Endothelial cell of umbilical vein (primary cell): ENCODE measurements at regions of chr15 and their contacts with region 1.

Region 1: DNA sequence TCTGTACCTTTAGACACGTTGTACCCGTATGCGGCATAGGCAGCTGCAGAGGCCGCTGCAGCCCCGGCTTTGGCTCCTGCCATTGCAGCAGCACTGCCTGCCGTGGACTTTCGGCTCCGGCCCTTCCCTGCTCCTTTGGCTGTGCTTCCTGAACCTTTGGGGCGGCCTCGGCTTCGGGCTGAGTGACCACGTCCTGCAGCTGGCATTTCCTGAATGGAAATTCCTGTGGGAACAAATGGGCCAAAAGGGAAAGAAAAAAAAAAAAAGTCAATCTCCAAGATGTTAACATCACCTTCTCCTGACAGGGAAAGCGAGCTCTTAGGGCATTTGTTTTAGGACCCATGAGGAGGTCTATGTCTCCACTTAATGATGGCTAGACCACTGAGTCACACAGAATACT is 29.6 kb downstream of the CHAC1 start:
- DNase-seq: peak; percentile 93
- H3K4me3 ChIP-seq: peak overlapping the region in 1 of 3 experiments; percentile 23
- H3K27ac ChIP-seq: peak overlapping the region; percentile 94
- H3K4me1 ChIP-seq: peaks cover 40% of the 10 kb centered on the region
- H3K27me3 ChIP-seq: no peaks in the 10 kb centered on the region
- CTCF ChIP-seq: peak; percentile 12 to 42
- POLR2A ChIP-seq: peak; percentile 57

Region 2: DNA sequence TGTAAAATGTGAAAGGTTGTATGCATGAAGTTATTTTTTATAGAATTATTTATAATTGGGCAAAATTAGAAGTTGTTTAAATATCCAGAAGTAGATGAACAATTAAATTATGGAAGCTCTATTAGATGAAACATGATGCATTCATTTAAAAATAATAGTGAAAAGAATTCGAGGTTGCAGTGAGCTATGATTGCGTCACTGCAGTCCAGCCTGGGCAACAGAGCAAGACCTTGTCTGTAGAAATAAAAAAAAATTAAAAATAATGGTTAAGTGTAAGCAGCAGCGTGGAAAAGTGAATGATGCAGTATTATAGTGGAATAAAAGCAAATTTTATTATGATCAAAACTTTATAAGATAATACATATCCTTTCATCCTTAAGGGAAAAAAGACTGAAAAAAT is 807.7 kb before region 1 on chr15:
- CTCF ChIA-PET with region 1: no interaction called
- POLR2A ChIA-PET with region 1: no interaction called
- dilution Hi-C with region 1: no loop called
- intact Hi-C with region 1: no loop called
- DNase-seq: no peak
- H3K4me3 ChIP-seq: no peak overlapping the region
- H3K27ac ChIP-seq: no peak overlapping the region
- H3K4me1 ChIP-seq: no peaks in the 10 kb centered on the region
- H3K27me3 ChIP-seq: no peaks in the 10 kb centered on the region
- CTCF ChIP-seq: no peak
- POLR2A ChIP-seq: no peak

Region 3: GRCh38 chr15:40928821-40929659 is 53.8 kb before region 1 on chr15 and contains the start of gene DLL4:
- CTCF ChIA-PET with region 1: interaction called, 14 read pairs
- POLR2A ChIA-PET with region 1: interaction called, 4 read pairs
- dilution Hi-C with region 1: no loop called
- intact Hi-C with region 1: no loop called
- DNase-seq: peak; percentile 94
- H3K4me3 ChIP-seq: peak within 1 kb of the TSS; percentile 0 to 89 (median 56)
- H3K27ac ChIP-seq: no peak within 1 kb of the TSS
- H3K4me1 ChIP-seq: peaks cover 25% of the 10 kb centered on the region
- H3K27me3 ChIP-seq: peaks cover 14 to 21% of the 10 kb centered on the region in 2 experiments
- CTCF ChIP-seq: peak in 1 of 2 donors; percentile 7
- POLR2A ChIP-seq: peak; percentile 99
- total RNA-seq, gene DLL4: 55.2 and 75.8 TPM in 2 replicates

Region 4: DNA sequence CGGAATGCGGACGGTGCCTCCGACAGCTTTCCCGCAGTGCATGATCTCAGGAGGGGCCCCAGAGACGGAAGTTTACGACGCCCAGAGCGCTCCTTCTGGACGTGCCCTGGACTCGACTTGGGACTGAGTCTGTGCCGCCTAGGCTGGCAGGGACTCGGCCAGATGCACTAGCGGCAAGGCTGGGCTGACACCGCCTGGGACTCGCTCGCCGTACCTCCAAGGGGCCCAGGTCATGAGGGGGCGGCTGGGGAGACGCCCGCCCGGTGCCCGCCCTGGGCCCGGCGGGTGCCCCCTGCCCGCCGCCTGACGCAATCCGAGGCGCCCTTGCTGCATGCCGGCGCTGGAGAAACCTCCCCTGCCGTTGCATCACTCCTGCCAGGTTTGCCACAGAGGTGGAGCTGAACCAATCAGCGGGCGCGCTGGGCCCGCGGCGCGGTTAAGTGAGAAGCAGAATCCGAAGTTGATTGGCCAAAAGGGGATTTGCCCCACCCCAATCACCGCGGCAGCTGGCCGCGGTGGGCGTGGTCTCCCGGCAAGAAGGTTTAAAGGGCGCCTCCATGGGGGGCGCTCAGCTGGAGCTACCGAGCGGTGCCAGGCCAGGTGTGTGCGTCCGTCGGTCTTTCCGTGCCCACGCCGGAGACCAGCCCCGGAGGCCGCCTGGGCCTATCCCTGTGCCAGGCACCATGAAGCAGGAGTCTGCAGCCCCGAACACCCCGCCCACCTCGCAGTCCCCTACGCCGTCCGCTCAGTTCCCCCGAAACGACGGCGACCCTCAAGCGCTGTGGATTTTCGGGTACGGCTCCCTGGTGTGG is 29.7 kb before region 1 on chr15 and contains the start of gene CHAC1:
- CTCF ChIA-PET with region 1: interaction called, 29 read pairs
- POLR2A ChIA-PET with region 1: interaction called, 5 read pairs
- dilution Hi-C with region 1: no loop called
- intact Hi-C with region 1: loop called (anchors 2 kb)
- DNase-seq: peak; percentile 98
- H3K4me3 ChIP-seq: peak within 1 kb of the TSS; percentile 32 to 90 (median 37)
- H3K27ac ChIP-seq: peak within 1 kb of the TSS; percentile 61
- H3K4me1 ChIP-seq: peaks cover 10% of the 10 kb centered on the region
- H3K27me3 ChIP-seq: no peaks in the 10 kb centered on the region
- CTCF ChIP-seq: peak in 1 of 2 donors; percentile 9
- POLR2A ChIP-seq: peak; percentile 77
- total RNA-seq, gene CHAC1: 4.6 and 5.6 TPM in 2 replicates

Region 5: DNA sequence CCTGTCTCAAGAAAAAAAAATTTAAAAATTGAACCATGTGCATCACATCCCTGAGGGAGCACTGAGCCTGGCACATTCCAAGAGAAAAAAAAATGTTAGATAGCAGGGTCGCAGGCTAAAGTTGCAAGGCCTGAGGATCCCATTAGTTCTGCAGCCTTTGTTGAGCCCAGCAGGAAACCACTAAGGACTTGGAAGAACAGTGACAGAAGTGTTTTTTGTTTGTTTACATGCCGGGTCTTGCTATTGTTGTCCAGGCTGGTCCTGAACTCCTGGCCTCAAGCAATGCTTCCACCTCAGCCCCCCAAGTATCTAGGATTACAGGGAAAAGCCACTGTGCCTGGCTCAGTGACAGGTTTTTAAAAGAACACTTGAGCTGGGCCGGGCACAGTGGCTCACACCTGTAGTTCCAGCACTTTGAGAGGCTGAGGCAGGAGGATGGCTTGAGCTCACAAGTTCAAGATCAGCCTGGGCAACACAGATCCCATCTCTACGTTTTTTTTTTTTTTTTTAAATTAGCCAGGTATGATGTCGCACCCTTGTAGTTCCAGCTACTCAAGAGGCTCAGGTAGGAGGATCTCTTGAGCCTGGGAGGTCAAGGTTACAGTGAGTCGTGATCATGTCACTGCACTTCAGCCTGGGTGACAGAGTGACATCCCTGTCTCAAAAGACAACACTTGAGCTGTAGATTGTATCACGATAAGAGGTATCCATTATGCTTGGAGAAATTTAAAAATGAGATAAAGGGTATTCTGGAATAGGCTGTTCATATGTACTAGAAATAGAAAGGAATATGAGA is 14.4 kb before region 1 on chr15:
- CTCF ChIA-PET with region 1: interaction called, 10 read pairs
- POLR2A ChIA-PET with region 1: interaction called, 7 read pairs
- dilution Hi-C with region 1: no loop called
- intact Hi-C with region 1: no loop called
- DNase-seq: no peak
- H3K4me3 ChIP-seq: no peak overlapping the region
- H3K27ac ChIP-seq: no peak overlapping the region
- H3K4me1 ChIP-seq: no peaks in the 10 kb centered on the region
- H3K27me3 ChIP-seq: no peaks in the 10 kb centered on the region
- CTCF ChIP-seq: no peak
- POLR2A ChIP-seq: no peak

Region 6: GRCh38 chr15:41001524-41002214 is 18.8 kb after region 1 on chr15:
- CTCF ChIA-PET with region 1: interaction called, 4 read pairs
- POLR2A ChIA-PET with region 1: interaction called, 5 read pairs
- dilution Hi-C with region 1: no loop called
- intact Hi-C with region 1: loop called (anchors 2 kb)
- DNase-seq: peak; percentile 59
- H3K4me3 ChIP-seq: no peak overlapping the region
- H3K27ac ChIP-seq: peak overlapping the region; percentile 58
- H3K4me1 ChIP-seq: peaks cover 10% of the 10 kb centered on the region
- H3K27me3 ChIP-seq: no peaks in the 10 kb centered on the region
- CTCF ChIP-seq: no peak
- POLR2A ChIP-seq: no peak

Region 7: GRCh38 chr15:41011055-41011815 is 28.4 kb after region 1 on chr15:
- CTCF ChIA-PET with region 1: interaction called, 75 read pairs
- POLR2A ChIA-PET with region 1: no interaction called
- dilution Hi-C with region 1: no loop called
- intact Hi-C with region 1: no loop called
- DNase-seq: peak; percentile 51
- H3K4me3 ChIP-seq: no peak overlapping the region
- H3K27ac ChIP-seq: no peak overlapping the region
- H3K4me1 ChIP-seq: peaks cover 14% of the 10 kb centered on the region
- H3K27me3 ChIP-seq: no peaks in the 10 kb centered on the region
- CTCF ChIP-seq: no peak
- POLR2A ChIP-seq: no peak